Activated B cell treated with CpG ODN at 0.5 μM for 24 hours (primary cell): ENCODE measurements at regions of chr1 and their contacts with region 1.

Region 1: GRCh38 chr1:198556971-198557370 is 16.5 kb upstream of the ATP6V1G3 start:
- DNase-seq: peak; percentile 26
- ATAC-seq: peak; percentile 93
- H3K4me3 Mint-ChIP-seq: peak overlapping the region; percentile 52
- H3K27ac Mint-ChIP-seq: peak overlapping the region; percentile 72
- H3K4me1 Mint-ChIP-seq: peaks cover 58% of the 10 kb centered on the region
- H3K27me3 Mint-ChIP-seq: no peaks in the 10 kb centered on the region
- CTCF ChIP-seq: no peak

Region 2: DNA sequence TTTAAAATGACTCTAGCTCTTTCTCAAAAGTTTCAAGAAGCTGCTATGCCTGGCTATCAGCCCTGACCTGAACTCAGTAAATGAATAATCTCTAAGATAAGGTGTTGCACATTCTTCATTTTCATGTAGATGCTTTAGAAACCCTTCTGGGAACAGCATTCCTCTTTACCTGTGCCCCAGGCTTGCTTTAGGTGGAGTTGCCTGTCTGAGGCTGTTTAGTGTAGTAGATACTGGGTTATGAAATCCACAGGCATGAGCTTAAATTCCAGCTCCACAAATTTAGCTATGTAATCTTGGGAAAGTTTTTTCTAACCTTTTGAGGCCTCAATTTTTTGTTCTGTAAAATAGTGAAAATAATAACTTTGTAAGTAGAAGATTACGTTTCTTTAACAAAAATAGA is 58.1 kb before region 1 on chr1:
- CTCF ChIA-PET with region 1: no interaction called
- POLR2A ChIA-PET with region 1: no interaction called
- intact Hi-C with region 1: no loop called
- DNase-seq: no peak
- ATAC-seq: no peak
- H3K4me3 Mint-ChIP-seq: no peak overlapping the region
- H3K27ac Mint-ChIP-seq: no peak overlapping the region
- H3K4me1 Mint-ChIP-seq: peaks cover 29% of the 10 kb centered on the region
- H3K27me3 Mint-ChIP-seq: no peaks in the 10 kb centered on the region
- CTCF ChIP-seq: no peak

Region 3: GRCh38 chr1:198543670-198544260 is 13.2 kb before region 1 on chr1:
- CTCF ChIA-PET with region 1: interaction called, 3 read pairs
- POLR2A ChIA-PET with region 1: interaction called, 10 read pairs
- intact Hi-C with region 1: loop called (anchors 1 kb)
- DNase-seq: no peak
- ATAC-seq: peak; percentile 85
- H3K4me3 Mint-ChIP-seq: peak overlapping the region; percentile 62
- H3K27ac Mint-ChIP-seq: peak overlapping the region; percentile 92
- H3K4me1 Mint-ChIP-seq: peaks cover 66% of the 10 kb centered on the region
- H3K27me3 Mint-ChIP-seq: no peaks in the 10 kb centered on the region
- CTCF ChIP-seq: no peak

Region 4: DNA sequence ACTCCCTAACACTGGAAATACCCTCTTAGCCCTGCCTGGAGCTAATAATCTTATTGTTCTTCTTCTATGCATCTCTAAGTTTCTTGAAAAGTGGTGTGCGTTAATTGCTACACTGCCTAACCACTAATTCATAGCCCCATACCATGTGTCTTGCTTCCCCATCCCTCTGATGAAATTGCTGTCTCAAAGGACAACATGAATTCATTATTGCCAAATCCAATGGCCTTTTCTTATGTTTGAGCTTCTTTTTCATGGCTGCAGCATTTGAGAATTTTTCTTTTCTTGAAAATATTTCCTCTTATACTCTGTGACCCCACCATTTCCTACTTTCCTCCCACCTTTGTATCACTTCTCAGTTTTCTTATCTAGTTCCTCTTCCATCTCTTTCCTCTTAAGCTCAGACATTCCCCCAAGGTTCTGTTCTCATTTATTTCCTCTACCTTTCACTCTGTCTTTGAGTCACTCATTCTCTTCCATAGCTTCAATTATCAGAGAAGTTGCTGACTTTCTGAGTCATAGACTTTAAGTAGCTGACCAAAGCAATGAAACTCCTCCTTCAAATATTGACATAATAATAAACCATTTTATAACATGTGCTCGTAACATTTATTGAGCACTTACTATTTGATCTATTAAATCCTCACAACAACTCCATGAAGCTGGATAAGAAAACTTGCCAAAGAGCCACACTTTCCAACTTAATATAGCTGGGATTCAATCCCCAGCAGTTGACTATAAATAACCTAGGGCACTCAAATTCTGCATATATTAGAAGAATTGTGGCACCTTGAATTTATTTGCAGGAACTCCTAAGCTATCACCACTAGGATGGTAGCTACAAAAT is 19.0 kb after region 1 on chr1:
- CTCF ChIA-PET with region 1: no interaction called
- POLR2A ChIA-PET with region 1: interaction called, 9 read pairs
- intact Hi-C with region 1: loop called (anchors 1 kb)
- DNase-seq: no peak
- ATAC-seq: peak; percentile 89
- H3K4me3 Mint-ChIP-seq: peak overlapping the region; percentile 21
- H3K27ac Mint-ChIP-seq: peak overlapping the region; percentile 82
- H3K4me1 Mint-ChIP-seq: peaks cover 30% of the 10 kb centered on the region
- H3K27me3 Mint-ChIP-seq: no peaks in the 10 kb centered on the region
- CTCF ChIP-seq: no peak